Activated B cell treated with CpG ODN at 0.5 μM for 24 hours (primary cell): ENCODE measurements at regions of chr14 and their contacts with region 1.

Region 1: DNA sequence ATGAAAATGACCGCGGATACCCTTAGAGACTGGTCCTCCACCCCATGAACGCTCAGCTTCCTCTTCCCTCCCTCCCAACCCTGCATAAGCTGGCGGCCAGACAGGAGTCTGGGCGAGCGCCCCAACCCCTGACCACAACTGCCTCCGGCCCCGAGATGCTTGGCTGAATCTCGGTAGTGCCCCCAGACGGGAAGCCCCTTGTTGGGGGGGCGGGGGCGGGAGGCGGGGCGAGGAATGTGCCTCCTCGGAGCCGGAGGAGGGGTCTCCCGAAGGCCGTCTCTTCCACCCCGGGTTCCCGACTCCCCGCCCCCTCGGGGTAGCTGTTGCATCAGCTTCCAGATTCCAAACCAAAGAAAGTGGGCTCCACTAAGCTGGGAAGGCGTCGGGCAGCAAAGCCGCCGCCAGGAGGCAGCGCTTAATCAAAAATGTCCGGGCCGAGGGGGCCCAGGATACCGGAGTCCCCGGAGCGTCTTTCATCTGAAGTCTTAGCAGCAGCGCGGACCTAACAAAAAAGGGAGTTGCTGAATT is 7.1 kb upstream of the MRPL52 start:
- DNase-seq: peak; percentile 69
- ATAC-seq: peak; percentile 76
- H3K4me3 Mint-ChIP-seq: peak overlapping the region; percentile 86
- H3K27ac Mint-ChIP-seq: peak overlapping the region; percentile 92
- H3K4me1 Mint-ChIP-seq: peaks cover 60% of the 10 kb centered on the region
- H3K27me3 Mint-ChIP-seq: no peaks in the 10 kb centered on the region
- CTCF ChIP-seq: no peak

Region 2: GRCh38 chr14:22383515-22384166 is 439.0 kb before region 1 on chr14:
- CTCF ChIA-PET with region 1: no interaction called
- POLR2A ChIA-PET with region 1: no interaction called
- intact Hi-C with region 1: no loop called
- DNase-seq: peak; percentile 57
- ATAC-seq: peak; percentile 86
- H3K4me3 Mint-ChIP-seq: peak overlapping the region; percentile 61
- H3K27ac Mint-ChIP-seq: peak overlapping the region; percentile 98
- H3K4me1 Mint-ChIP-seq: peaks cover 79% of the 10 kb centered on the region
- H3K27me3 Mint-ChIP-seq: no peaks in the 10 kb centered on the region
- CTCF ChIP-seq: no peak

Region 3: DNA sequence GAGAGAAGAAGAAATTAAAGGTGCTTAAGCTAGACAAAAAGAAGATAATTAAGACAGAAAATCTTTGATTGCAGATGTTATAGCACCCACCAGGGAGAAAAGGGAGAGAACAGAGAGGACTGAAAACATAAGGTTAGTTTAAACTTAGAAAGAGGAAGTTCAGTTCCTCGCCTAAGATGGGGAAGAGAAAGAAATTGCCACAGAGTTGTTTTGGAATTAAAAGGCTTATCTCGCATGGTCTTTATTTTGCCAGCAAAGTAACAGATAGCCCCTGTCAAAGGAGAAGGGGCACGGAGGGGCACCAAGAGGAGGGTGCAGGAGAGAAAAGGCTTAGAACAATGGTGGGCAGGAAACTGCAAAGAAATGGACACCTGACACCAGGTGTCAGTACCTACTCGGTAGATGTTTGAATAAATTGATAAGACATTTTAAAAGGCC is 74.0 kb before region 1 on chr14:
- CTCF ChIA-PET with region 1: interaction called, 23 read pairs
- POLR2A ChIA-PET with region 1: interaction called, 9 read pairs
- intact Hi-C with region 1: loop called (anchors 2 kb)
- DNase-seq: peak; percentile 24
- ATAC-seq: peak; percentile 78
- H3K4me3 Mint-ChIP-seq: peak overlapping the region; percentile 78
- H3K27ac Mint-ChIP-seq: peak overlapping the region; percentile 99
- H3K4me1 Mint-ChIP-seq: peaks cover 23% of the 10 kb centered on the region
- H3K27me3 Mint-ChIP-seq: no peaks in the 10 kb centered on the region
- CTCF ChIP-seq: no peak

Region 4: DNA sequence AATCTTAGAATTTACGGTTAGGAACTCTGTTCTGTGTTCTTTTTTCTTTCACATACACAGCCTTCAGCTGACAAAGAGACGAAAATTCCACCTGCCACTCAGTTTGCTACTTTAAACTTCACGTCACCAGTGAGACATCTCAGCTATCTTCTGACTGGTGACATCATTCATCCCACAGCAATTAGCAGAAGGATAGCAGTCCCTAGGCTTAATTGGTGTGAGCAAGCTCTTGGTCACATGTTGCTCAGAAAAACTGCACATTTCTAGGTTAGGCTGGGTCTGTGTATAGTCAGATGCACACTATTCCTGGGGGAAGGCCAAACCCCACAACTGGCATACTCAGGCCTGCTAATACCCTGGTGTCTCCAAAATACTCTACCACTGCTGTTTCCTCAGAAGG is 31.3 kb before region 1 on chr14:
- CTCF ChIA-PET with region 1: interaction called, 16 read pairs
- POLR2A ChIA-PET with region 1: interaction called, 43 read pairs
- intact Hi-C with region 1: loop called (anchors 1 kb)
- DNase-seq: no peak
- ATAC-seq: no peak
- H3K4me3 Mint-ChIP-seq: peak overlapping the region; percentile 28
- H3K27ac Mint-ChIP-seq: peak overlapping the region; percentile 91
- H3K4me1 Mint-ChIP-seq: peaks cover 70% of the 10 kb centered on the region
- H3K27me3 Mint-ChIP-seq: no peaks in the 10 kb centered on the region
- CTCF ChIP-seq: no peak

Region 5: GRCh38 chr14:22836301-22837113 is 13.9 kb after region 1 on chr14 and contains the start of gene MMP14:
- CTCF ChIA-PET with region 1: interaction called, 17 read pairs
- POLR2A ChIA-PET with region 1: interaction called, 24 read pairs
- intact Hi-C with region 1: no loop called
- DNase-seq: no peak
- ATAC-seq: peak; percentile 38
- H3K4me3 Mint-ChIP-seq: peak within 1 kb of the TSS; percentile 88
- H3K27ac Mint-ChIP-seq: peak within 1 kb of the TSS; percentile 76
- H3K4me1 Mint-ChIP-seq: peaks cover 17% of the 10 kb centered on the region
- H3K27me3 Mint-ChIP-seq: peaks cover 2% of the 10 kb centered on the region
- CTCF ChIP-seq: no peak
- total RNA-seq, gene MMP14: 3.4 and 4.1 TPM in 2 replicates

Region 6: GRCh38 chr14:22900081-22900799 is 77.6 kb after region 1 on chr14:
- CTCF ChIA-PET with region 1: interaction called, 3 read pairs
- POLR2A ChIA-PET with region 1: interaction called, 4 read pairs
- intact Hi-C with region 1: loop called (anchors 1 kb)
- DNase-seq: no peak
- ATAC-seq: peak; percentile 91
- H3K4me3 Mint-ChIP-seq: no peak overlapping the region
- H3K27ac Mint-ChIP-seq: peak overlapping the region; percentile 43
- H3K4me1 Mint-ChIP-seq: peaks cover 5% of the 10 kb centered on the region
- H3K27me3 Mint-ChIP-seq: no peaks in the 10 kb centered on the region
- CTCF ChIP-seq: no peak